Naive thymus-derived CD4-positive, alpha-beta T cell (primary cell): ENCODE measurements at regions of chr12 and their contacts with region 1.

Region 1: GRCh38 chr12:81692008-81692407 is 67.1 kb downstream of the PPFIA2 start:
- DNase-seq: no peak
- ATAC-seq: no peak
- H3K4me3 ChIP-seq: no peak overlapping the region
- H3K4me3 Mint-ChIP-seq: no peak overlapping the region
- H3K27ac ChIP-seq: no peak overlapping the region
- H3K27ac Mint-ChIP-seq: no peak overlapping the region
- H3K4me1 ChIP-seq: no peaks in the 10 kb centered on the region
- H3K4me1 Mint-ChIP-seq: no peaks in the 10 kb centered on the region
- H3K27me3 ChIP-seq: no peaks in the 10 kb centered on the region
- H3K27me3 Mint-ChIP-seq: peaks cover 0 to 3% (median 0%) of the 10 kb centered on the region in 5 donors

Region 2: DNA sequence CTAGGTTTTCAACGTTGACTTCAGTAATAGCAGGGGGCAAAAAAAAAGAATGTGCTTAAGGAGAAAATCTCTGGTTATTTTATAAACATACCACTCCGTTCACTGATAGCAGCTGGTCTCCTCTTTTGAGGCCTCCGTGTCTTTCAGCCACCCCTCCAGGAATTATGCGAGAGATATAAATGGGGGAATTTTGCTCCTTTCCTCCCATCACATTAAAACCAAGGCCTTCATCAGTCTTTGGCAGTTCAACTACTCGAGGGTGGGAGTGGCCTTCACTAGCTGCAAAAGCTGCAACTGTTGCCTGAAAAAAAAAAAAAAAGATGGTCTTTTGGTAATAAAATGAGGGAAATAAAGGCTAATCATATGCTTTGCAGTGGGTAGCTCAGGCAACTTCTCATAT is 846.4 kb before region 1 on chr12:
- CTCF ChIA-PET with region 1: no interaction called
- POLR2A ChIA-PET with region 1: interaction called, 13 read pairs
- intact Hi-C with region 1: no loop called
- DNase-seq: no peak
- ATAC-seq: no peak
- H3K4me3 ChIP-seq: no peak overlapping the region
- H3K4me3 Mint-ChIP-seq: no peak overlapping the region
- H3K27ac ChIP-seq: no peak overlapping the region
- H3K27ac Mint-ChIP-seq: no peak overlapping the region
- H3K4me1 ChIP-seq: no peaks in the 10 kb centered on the region
- H3K4me1 Mint-ChIP-seq: no peaks in the 10 kb centered on the region
- H3K27me3 ChIP-seq: no peaks in the 10 kb centered on the region
- H3K27me3 Mint-ChIP-seq: no peaks in the 10 kb centered on the region

Region 3: DNA sequence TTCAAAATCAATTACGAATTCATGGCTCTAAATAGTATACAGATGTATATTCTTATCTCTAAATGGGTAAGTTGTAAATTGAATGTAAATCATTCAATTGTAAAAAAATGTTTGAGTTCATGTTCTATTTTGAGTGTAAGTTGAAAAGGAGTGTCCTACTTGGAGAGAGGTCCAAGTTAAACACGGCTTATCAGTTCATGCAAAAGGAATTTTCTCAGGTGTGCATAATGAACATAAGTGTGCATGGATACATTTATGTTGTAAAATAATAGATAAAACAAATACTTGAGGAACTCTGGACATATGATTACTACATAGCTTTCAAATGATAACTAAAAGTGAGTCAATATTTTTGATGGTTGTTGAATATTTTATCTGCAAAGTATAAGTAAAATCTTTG is 12.4 kb before region 1 on chr12:
- CTCF ChIA-PET with region 1: no interaction called
- POLR2A ChIA-PET with region 1: no interaction called
- intact Hi-C with region 1: no loop called
- DNase-seq: no peak
- ATAC-seq: no peak
- H3K4me3 ChIP-seq: no peak overlapping the region
- H3K4me3 Mint-ChIP-seq: no peak overlapping the region
- H3K27ac ChIP-seq: no peak overlapping the region
- H3K27ac Mint-ChIP-seq: no peak overlapping the region
- H3K4me1 ChIP-seq: no peaks in the 10 kb centered on the region
- H3K4me1 Mint-ChIP-seq: no peaks in the 10 kb centered on the region
- H3K27me3 ChIP-seq: no peaks in the 10 kb centered on the region
- H3K27me3 Mint-ChIP-seq: peaks cover 0 to 15% (median 5%) of the 10 kb centered on the region in 5 donors